ENCODE measurements at regions of chr10 and their contacts with region 1.

Region 1: DNA sequence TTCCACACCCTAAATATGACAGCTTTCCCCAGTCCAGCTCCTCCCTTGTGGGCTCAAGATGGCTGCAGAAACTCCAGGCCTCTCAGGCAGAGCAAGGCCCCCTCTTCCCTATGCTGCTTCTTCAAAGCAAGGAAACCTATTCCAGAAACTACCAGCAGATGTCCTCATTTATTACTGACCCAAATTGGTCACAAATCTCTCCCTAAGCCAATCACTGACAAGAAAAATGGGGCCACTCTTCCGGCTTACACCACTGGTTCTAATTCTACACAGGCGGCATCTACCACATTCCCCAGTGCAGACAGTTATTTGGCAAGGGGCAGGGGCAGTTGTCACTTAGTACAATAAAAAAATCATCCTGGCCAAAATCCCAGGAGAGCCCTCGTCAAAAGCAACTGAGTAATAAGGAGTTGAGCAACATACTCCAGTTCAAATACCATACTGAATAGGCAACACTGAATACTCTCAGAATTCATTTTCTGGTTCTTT is 150.4 kb downstream of the SFMBT2 start:
- DNase-seq: peak; percentile 93
- H3K4me3 ChIP-seq: no peak overlapping the region
- H3K27ac ChIP-seq: peak overlapping the region; percentile 7 to 78 (median 58)
- H3K4me1 ChIP-seq: peaks cover 0 to 34% (median 25%) of the 10 kb centered on the region in 4 donors
- H3K27me3 ChIP-seq: no peaks in the 10 kb centered on the region
- CTCF ChIP-seq: peak; percentile 63 to 81 (median 74)
- EP300 ChIP-seq: peak in 3 of 4 donors; percentile 16 to 69 (median 51)
- POLR2A ChIP-seq: no peak

Region 2: GRCh38 chr10:6920072-6921019 is 340.1 kb before region 1 on chr10:
- intact Hi-C with region 1: loop called (anchors 10 kb)
- DNase-seq: peak; percentile 82
- H3K4me3 ChIP-seq: no peak overlapping the region
- H3K27ac ChIP-seq: no peak overlapping the region
- H3K4me1 ChIP-seq: peaks cover 0 to 10% (median 8%) of the 10 kb centered on the region in 4 donors
- H3K27me3 ChIP-seq: peaks cover 0 to 12% (median 0%) of the 10 kb centered on the region in 3 donors
- CTCF ChIP-seq: peak; percentile 13 to 56 (median 34)
- EP300 ChIP-seq: no peak
- POLR2A ChIP-seq: no peak

Region 3: DNA sequence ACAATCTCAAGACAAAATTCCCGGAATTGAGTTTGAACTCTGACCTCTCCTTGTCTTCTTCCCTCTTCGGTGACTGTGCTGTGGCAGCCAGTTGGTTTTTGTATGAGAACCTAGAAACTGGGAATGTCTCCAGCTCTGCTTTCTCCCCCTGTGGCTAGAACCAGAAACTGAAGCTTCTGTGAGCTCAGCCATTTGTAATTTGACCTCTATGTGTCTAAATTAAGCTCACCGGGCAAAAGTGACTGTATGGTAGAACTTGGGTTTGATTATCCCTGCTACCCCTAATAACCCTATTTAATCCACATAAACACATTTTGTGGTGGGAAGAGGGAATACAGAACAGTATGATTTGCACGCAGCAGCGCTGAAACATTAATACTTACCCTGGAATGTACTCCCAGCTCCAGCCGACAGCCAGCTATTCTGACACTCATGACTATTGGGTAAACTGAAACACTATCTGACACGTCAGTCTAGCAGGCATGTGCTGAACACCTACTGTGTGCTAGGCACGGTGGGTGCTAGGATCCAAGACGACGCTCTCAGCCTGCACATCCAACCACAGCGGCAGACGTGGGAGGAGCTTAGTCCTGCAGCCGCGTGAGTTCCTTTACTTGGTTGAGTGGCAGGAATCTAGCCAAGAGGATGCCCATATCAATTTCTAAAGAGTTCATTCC is 174.4 kb before region 1 on chr10:
- intact Hi-C with region 1: loop called (anchors 1 kb)
- DNase-seq: no peak
- H3K4me3 ChIP-seq: no peak overlapping the region
- H3K27ac ChIP-seq: no peak overlapping the region
- H3K4me1 ChIP-seq: peaks cover 0 to 21% (median 12%) of the 10 kb centered on the region in 4 donors
- H3K27me3 ChIP-seq: peaks cover 0 to 27% (median 6%) of the 10 kb centered on the region in 3 donors
- CTCF ChIP-seq: no peak
- EP300 ChIP-seq: no peak
- POLR2A ChIP-seq: no peak

Region 4: DNA sequence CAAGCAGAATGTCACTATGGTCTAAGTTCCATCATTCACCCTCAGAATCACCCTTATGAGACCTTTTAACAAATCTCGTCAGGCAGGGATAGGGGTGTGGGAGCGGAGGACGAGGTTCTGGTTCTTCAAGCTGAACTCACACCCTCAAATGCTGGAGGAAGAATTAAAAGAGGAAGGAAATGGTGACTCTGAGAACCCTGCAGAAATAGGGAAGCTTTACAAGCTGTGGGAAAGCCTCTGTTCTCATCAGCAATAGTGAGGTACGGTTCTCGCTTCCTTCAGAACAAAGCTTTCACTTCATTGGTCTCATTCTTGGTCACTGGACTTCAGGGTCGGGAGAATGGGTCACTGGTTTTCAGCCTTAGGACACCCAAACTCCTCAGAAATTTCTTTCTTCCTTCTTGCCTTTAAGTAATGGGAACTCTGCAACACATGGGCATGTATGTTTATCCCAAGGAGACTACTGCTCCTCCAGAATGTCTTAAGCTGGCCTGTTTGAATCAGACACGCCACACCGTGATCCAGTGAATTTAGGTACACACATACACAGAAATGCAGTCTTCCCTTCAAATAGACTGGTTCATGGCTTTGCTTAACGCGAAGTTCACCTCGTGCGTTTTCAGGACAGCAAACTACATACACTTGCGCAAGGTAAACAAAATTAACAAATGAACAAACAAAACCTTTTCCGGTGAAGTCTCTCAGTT is 75.6 kb before region 1 on chr10:
- intact Hi-C with region 1: no loop called
- DNase-seq: no peak
- H3K4me3 ChIP-seq: no peak overlapping the region
- H3K27ac ChIP-seq: no peak overlapping the region
- H3K4me1 ChIP-seq: no peaks in the 10 kb centered on the region
- H3K27me3 ChIP-seq: no peaks in the 10 kb centered on the region
- CTCF ChIP-seq: no peak
- EP300 ChIP-seq: no peak
- POLR2A ChIP-seq: no peak

Region 5: DNA sequence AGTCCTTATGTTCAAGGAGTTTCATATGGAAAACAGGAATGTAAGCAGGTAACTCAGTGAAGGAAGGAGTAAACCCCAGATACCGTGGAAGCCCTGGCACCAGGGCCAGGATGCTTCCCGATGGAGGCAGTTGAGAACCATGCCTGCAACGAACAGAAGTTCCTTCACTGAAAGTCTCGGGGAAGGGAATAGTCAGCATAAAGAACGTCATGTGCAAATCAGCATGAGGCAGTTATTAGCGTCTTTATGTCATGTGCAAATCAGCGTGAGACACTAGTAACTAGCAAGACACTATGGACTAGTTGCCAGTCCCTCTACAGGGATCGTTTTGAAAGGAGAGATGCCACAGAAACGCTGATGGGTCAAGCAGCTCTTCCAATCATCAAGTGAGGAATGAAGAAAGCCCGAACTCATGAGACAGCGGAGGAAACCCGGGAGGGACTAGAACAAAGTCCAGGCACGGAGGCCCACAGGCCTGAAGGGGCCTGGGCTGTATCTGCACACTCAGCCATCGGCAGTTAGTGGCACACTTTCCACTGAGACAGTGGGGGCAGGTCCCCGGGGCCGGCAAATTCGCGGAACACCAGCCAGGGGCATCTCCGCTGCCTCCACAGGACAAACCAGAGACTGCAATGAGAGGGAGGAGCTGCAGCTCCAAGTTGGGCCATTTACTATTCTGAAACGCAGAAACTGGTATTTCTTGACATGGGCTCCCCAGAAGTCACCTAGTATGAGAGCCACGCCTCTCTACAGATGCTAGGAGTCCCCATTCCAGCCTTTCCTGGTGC is 40.7 kb after region 1 on chr10:
- intact Hi-C with region 1: loop called (anchors 5 kb)
- DNase-seq: no peak
- H3K4me3 ChIP-seq: no peak overlapping the region
- H3K27ac ChIP-seq: peak overlapping the region in 1 of 4 donors; percentile 19
- H3K4me1 ChIP-seq: peaks cover 0 to 48% (median 32%) of the 10 kb centered on the region in 4 donors
- H3K27me3 ChIP-seq: no peaks in the 10 kb centered on the region
- CTCF ChIP-seq: no peak
- EP300 ChIP-seq: no peak
- POLR2A ChIP-seq: no peak

Region 6: DNA sequence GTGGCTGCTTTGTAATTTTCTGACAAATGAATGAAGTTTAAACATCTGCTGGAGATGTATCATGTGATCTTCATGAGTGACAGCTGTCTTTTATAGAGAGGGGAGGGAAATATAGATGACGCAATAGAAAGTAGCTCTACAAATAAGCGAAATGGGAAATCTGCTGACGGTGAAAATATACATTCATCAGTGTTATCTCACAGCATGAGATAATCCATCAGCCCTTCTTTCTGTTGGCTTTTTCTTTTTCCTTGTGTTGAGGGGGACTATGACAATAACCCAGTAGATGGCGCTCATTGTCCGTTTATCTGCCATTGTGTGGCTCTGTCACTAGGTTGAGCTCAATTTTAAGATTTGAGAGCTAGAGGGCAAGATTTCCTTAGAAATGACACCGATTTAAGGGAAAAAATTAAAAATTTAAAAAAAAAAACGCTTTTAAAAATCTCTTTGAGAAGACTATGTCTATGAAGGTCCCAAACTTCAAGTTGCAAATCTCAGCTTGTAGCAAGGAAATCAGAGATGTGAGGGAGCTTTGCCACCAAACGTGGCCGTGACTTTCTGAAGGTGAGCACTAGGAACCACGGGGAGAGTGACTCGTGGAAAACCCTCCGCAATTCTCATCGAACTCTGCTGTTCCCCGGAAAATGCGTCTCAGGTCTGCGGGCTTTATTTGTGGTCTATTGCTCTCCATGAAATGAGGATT is 265.0 kb after region 1 on chr10:
- intact Hi-C with region 1: loop called (anchors 5 kb)
- DNase-seq: peak; percentile 80
- H3K4me3 ChIP-seq: no peak overlapping the region
- H3K27ac ChIP-seq: no peak overlapping the region
- H3K4me1 ChIP-seq: peaks cover 0 to 4% (median 0%) of the 10 kb centered on the region in 4 donors
- H3K27me3 ChIP-seq: peaks cover 0 to 8% (median 0%) of the 10 kb centered on the region in 3 donors
- CTCF ChIP-seq: peak; percentile 82 to 91 (median 86)
- EP300 ChIP-seq: no peak
- POLR2A ChIP-seq: no peak